Naive thymus-derived CD4-positive, alpha-beta T cell (primary cell): ENCODE measurements at regions of chr1 and their contacts with region 1.

Region 1: GRCh38 chr1:24526940-24527542 is 24.4 kb downstream of the RCAN3 start:
- DNase-seq: peak in 8 of 9 donors; percentile 28 to 66 (median 56)
- ATAC-seq: peak; percentile 69
- H3K4me3 ChIP-seq: no peak overlapping the region
- H3K4me3 Mint-ChIP-seq: peak overlapping the region in 7 of 10 donors; percentile 23 to 57 (median 39)
- H3K27ac ChIP-seq: peak overlapping the region; percentile 40
- H3K27ac Mint-ChIP-seq: peak overlapping the region in 8 of 9 donors; percentile 32 to 93 (median 84)
- H3K4me1 ChIP-seq: peaks cover 0 to 49% of the 10 kb centered on the region in 2 donors
- H3K4me1 Mint-ChIP-seq: peaks cover 31 to 86% (median 71%) of the 10 kb centered on the region in 7 donors
- H3K27me3 ChIP-seq: no peaks in the 10 kb centered on the region
- H3K27me3 Mint-ChIP-seq: no peaks in the 10 kb centered on the region

Region 2: DNA sequence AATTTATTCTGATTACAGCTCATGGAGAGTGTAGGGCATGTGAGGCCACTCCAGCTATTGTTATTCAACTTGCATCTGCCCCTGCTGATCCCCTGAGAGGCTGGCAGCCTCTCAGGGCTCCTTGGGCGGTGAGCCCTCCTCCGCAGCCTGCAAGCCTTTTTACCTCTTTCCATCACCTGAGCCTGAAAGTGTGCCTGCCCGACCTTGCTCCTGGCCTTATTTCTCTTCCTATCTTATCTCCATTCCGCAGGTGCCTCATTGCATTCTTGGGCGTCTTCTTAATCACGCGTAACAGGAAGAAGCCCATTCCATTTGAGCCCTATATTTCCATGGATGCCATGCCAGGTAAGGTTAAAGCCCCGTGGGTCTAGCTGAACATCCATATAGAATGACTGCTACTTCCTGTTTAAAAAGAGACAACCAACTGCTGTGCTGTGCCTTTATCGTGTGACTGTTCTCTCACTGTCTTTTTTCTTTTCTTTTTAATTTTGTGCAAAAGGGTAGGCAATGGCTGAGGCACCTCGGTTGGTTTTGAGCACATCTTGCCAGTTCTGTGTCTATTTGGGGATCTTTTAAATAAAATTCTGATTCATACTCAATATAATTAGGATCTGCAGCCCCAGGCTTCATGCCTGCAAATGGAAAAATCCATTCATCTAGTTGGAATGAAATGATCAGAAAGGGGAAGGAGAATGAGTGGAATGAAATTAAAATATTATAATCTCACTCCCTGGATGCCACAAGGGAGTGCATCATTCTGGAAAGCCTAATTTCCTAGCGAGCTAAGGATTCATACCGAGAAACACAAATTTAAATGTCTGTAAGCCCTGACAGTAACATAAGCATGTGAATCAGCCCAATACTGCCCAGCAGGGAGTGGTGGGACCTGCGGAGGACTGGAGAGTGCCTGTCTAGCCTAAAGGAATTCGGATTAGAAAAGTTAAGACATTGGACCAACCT is 63.0 kb before region 1 on chr1:
- CTCF ChIA-PET with region 1: interaction called, 7 read pairs
- POLR2A ChIA-PET with region 1: interaction called, 3 read pairs
- intact Hi-C with region 1: loop called in 1 of 2 experiments (anchors 5 kb)
- DNase-seq: peak in 6 of 9 donors; percentile 12 to 37 (median 31)
- ATAC-seq: no peak
- H3K4me3 ChIP-seq: no peak overlapping the region
- H3K4me3 Mint-ChIP-seq: peak overlapping the region in 8 of 10 donors; percentile 63 to 75 (median 68)
- H3K27ac ChIP-seq: peak overlapping the region; percentile 45
- H3K27ac Mint-ChIP-seq: peak overlapping the region; percentile 58 to 95 (median 86)
- H3K4me1 ChIP-seq: peaks cover 0 to 15% of the 10 kb centered on the region in 2 donors
- H3K4me1 Mint-ChIP-seq: peaks cover 21 to 65% (median 50%) of the 10 kb centered on the region in 7 donors
- H3K27me3 ChIP-seq: no peaks in the 10 kb centered on the region
- H3K27me3 Mint-ChIP-seq: no peaks in the 10 kb centered on the region

Region 3: DNA sequence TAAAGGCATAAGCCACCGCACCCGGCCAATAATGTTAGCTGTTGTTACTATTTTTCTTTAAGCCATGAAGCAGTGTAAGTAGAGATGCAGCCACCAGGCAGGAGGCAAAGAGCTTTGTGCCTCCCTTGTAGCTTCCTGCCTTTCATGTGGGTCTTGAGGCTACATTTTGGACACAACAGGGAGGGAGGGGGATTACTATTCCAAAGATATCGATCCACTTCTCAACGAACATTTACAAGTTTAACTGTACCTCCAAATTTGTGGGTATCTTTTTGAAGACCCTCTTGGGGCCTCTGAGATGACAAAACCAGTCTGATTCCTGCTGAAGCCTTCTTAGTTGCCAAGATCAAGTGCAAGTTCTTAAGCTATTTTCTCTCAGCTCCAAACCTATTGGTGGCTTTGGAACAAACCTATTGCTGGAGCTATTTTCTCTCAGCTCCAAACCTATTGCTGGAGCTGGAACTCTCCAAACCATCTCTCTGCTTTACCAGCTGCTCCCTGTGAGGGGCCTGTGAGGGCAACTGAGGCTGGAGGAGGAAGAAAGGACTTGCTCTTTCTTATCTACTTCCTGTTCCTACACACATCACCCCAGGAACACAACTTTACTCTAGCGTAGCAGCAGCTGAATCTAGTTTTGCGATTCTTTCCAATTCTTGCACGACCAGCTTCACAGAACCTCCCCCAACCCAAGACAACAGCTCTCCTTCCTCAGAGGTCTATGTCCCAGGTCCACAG is 40.5 kb before region 1 on chr1:
- CTCF ChIA-PET with region 1: interaction called, 8 read pairs
- POLR2A ChIA-PET with region 1: interaction called, 39 read pairs
- intact Hi-C with region 1: loop called in 1 of 2 experiments (anchors 1 kb)
- DNase-seq: peak in 7 of 9 donors; percentile 69 to 82 (median 77)
- ATAC-seq: peak; percentile 69
- H3K4me3 ChIP-seq: peak overlapping the region; percentile 11
- H3K4me3 Mint-ChIP-seq: peak overlapping the region; percentile 70 to 86 (median 78)
- H3K27ac ChIP-seq: peak overlapping the region; percentile 76
- H3K27ac Mint-ChIP-seq: peak overlapping the region; percentile 93 to 99 (median 97)
- H3K4me1 ChIP-seq: peaks cover 52 to 81% of the 10 kb centered on the region in 2 donors
- H3K4me1 Mint-ChIP-seq: peaks cover 47 to 90% (median 76%) of the 10 kb centered on the region in 7 donors
- H3K27me3 ChIP-seq: no peaks in the 10 kb centered on the region
- H3K27me3 Mint-ChIP-seq: no peaks in the 10 kb centered on the region

Region 4: GRCh38 chr1:24513706-24514105 is 13.3 kb before region 1 on chr1:
- CTCF ChIA-PET with region 1: interaction called, 9 read pairs
- POLR2A ChIA-PET with region 1: interaction called, 99 read pairs
- intact Hi-C with region 1: loop called in 1 of 2 experiments (anchors 1 kb)
- DNase-seq: no peak
- ATAC-seq: no peak
- H3K4me3 ChIP-seq: no peak overlapping the region
- H3K4me3 Mint-ChIP-seq: peak overlapping the region in 8 of 10 donors; percentile 48 to 84 (median 74)
- H3K27ac ChIP-seq: peak overlapping the region; percentile 62
- H3K27ac Mint-ChIP-seq: peak overlapping the region in 7 of 9 donors; percentile 76 to 93 (median 86)
- H3K4me1 ChIP-seq: peaks cover 34 to 79% of the 10 kb centered on the region in 2 donors
- H3K4me1 Mint-ChIP-seq: peaks cover 48 to 95% (median 81%) of the 10 kb centered on the region in 7 donors
- H3K27me3 ChIP-seq: no peaks in the 10 kb centered on the region
- H3K27me3 Mint-ChIP-seq: no peaks in the 10 kb centered on the region